ENCODE measurements at regions of chr6 and their contacts with region 1.

Region 1: DNA sequence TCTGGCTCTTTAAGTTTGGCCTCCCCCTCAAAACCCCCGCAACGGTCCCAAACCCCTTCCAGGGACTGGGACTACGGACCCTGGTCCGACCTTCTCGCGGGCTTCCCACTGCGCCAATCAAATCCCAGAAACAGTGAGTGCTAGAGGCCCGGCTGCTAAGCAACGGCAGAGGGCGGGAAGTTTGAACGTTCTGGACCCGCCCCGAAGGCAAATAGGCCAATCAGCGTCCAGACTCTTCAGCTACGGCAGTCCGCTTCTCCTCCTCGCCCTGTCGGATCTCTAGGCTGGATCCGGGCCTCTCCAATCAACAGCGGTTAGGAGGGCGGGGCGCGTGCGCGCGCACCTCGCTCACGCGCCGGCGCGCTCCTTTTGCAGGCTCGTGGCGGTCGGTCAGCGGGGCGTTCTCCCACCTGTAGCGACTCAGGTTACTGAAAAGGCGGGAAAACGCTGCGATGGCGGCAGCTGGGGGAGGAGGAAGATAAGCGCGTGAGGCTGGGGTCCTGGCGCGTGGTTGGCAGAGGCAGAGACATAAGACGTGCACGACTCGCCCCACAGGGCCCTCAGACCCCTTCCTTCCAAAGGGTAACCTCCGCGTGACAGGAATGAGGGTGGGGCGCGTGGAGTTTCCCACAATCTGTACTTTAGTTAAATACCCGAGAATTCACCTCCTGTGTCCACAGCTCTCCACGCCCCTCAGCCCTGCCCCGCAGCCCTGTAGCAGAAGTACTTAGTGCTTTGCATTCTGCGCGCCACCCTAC is at the start of gene MSH5:
- DNase-seq: peak; percentile 99
- H3K4me3 Mint-ChIP-seq: peak within 1 kb of the TSS; percentile 98
- H3K27ac Mint-ChIP-seq: peak within 1 kb of the TSS; percentile 93
- H3K4me1 Mint-ChIP-seq: peaks cover 54% of the 10 kb centered on the region
- H3K27me3 Mint-ChIP-seq: no peaks in the 10 kb centered on the region
- total RNA-seq, gene MSH5: 87.8 and 99.6 TPM in 2 replicates

Region 2: DNA sequence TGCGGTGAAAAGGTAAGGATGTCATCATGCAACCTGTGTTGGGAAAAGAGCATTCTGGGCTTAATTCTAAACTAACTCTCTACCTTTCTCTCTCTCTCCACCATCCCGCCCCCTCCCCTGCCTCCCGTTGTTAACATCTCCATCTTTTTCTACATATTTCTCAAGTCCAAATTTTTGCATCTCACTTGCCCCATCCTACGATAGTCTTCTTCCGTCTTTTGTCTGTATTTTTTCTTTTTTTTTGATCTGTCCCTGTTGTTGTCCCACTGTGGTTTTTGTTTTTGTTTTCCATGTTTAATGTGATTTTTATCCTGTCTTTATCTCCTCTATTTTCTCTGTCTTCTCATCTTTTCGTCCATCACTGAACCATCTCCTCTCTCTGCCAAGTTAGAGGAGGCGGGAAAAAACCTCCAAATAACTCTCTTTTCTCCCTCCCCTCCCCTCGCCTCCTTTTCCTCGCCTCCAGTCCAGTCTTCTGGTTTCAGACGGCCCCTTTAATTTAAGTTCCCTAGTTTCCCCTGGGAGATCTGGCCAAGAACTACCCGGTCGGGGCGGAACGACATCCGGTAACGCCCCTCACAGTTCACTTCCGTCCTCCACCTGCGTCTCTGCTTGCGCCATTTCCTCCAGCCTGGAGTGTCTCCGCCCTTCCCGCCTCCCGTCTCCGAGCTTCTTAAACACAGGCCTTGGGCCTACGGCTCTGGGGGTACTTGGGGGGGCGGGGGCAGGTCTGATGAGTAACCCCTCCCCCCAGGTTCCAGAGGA is 192.7 kb before region 1 on chr6 and contains the start of gene NFKBIL1:
- intact Hi-C with region 1: loop called (anchors 5 kb)
- DNase-seq: peak; percentile 97
- H3K4me3 Mint-ChIP-seq: peak within 1 kb of the TSS; percentile 91
- H3K27ac Mint-ChIP-seq: peak within 1 kb of the TSS; percentile 91
- H3K4me1 Mint-ChIP-seq: peaks cover 51% of the 10 kb centered on the region
- H3K27me3 Mint-ChIP-seq: no peaks in the 10 kb centered on the region
- total RNA-seq, gene NFKBIL1: 14.8 and 16.2 TPM in 2 replicates

Region 3: DNA sequence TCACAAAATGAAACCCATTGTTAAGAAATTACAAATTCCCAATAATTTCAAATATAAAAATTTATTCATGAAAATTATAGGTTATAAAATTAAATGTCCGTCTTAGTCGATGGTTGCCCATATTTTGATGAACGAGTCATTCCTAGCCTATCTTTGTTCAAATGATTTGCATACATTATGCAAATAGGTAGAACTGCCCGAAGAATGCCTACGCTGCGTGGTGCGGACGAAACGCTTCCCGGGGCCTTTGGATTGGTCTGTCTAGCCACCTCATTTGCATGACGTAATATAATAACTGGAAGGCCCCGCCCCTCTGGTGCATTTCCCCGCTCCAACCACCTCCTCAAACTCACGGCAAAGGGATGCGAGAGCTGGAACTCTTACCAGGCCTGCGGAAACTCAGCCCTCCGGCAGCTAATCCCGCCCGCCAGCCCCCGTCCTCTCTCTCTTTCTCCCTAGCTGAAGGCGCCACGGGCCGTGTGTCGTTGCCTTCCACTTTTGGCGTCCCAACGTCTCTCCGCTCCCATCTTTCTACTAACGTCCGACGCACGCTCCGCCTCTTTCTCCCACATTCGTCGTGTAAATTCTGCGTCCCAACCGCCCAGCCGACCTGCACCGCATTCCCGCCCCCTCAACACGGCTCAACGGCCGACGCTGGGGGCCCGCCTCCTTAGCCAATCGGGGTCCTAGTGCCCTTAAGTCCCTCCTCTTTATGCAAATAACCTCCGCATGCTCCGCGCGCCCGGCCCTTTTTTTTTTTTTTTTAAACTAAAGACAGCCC is 119.8 kb before region 1 on chr6:
- intact Hi-C with region 1: loop called (anchors 2 kb)
- DNase-seq: peak; percentile 99
- H3K4me3 Mint-ChIP-seq: peak overlapping the region; percentile 90
- H3K27ac Mint-ChIP-seq: peak overlapping the region; percentile 95
- H3K4me1 Mint-ChIP-seq: peaks cover 46% of the 10 kb centered on the region
- H3K27me3 Mint-ChIP-seq: no peaks in the 10 kb centered on the region

Region 4: GRCh38 chr6:31680840-31681671 is 58.8 kb before region 1 on chr6 and contains the start of gene LY6G5C:
- intact Hi-C with region 1: loop called (anchors 2 kb)
- DNase-seq: peak; percentile 89
- H3K4me3 Mint-ChIP-seq: peak within 1 kb of the TSS; percentile 83
- H3K27ac Mint-ChIP-seq: peak within 1 kb of the TSS; percentile 82
- H3K4me1 Mint-ChIP-seq: peaks cover 25% of the 10 kb centered on the region
- H3K27me3 Mint-ChIP-seq: no peaks in the 10 kb centered on the region
- total RNA-seq, gene LY6G5C: 4.1 and 4.9 TPM in 2 replicates

Region 5: DNA sequence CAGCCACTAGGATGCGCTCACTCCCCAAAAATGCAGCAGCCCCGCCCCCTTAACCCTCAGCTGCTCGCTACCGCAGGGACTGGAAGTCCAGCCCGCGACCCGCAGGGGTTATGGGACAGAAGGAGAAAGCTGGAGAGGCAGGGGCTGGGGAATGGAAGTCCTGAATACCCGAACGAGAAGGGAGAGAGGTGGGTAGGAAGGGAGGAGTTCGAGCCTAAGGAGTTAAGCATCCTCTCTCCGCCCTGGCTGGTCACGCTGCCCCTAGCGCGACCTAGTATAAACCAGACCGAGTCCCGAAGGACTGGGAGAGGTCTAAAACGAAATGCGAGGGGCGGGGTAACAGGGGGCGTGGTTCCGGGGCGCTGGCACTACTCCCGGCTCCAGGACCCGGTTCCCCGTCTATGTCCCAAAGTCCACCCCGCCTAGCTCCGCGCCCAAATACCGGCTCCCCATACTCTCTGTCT is 10.3 kb before region 1 on chr6:
- intact Hi-C with region 1: loop called (anchors 1 kb)
- DNase-seq: peak; percentile 93
- H3K4me3 Mint-ChIP-seq: peak overlapping the region; percentile 97
- H3K27ac Mint-ChIP-seq: peak overlapping the region; percentile 74
- H3K4me1 Mint-ChIP-seq: peaks cover 64% of the 10 kb centered on the region
- H3K27me3 Mint-ChIP-seq: no peaks in the 10 kb centered on the region

Region 6: GRCh38 chr6:31752739-31753319 is 13.0 kb after region 1 on chr6:
- intact Hi-C with region 1: no loop called
- DNase-seq: no peak
- H3K4me3 Mint-ChIP-seq: no peak overlapping the region
- H3K27ac Mint-ChIP-seq: no peak overlapping the region
- H3K4me1 Mint-ChIP-seq: no peaks in the 10 kb centered on the region
- H3K27me3 Mint-ChIP-seq: no peaks in the 10 kb centered on the region

Region 7: DNA sequence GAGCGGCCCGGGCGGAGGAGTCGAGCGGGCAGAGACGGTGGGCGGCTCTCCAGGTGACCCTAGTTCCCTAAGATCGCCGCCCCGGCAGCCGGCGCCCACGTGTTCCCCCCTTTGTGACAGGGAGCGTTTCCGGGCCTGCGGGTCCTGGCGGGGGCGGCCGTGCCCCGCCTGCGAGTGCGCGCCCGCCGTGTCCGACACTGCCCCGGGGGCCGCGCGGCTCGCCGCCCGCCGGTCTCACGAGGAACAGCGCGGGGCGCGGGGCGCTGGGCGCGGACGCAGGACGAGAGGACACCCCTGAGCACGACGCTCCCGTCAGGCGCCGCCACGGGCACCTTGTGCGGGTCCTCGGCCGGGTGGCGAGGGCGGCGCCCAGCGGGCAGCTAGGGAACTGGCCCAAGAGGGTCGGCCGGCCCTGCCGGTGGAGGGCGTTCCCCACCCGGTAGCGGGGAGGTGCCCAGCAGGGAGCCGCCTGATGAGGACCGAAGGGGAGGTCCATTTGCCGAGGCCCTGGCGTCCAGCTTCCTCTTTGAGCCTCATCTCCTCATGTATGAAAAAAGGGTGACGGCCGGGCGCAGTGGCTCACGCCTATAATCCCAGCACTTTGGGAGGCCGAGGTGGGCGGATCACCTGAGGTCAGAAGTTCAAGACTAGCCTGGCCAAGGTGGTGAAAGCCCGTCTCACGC is 55.9 kb after region 1 on chr6 and contains the start of gene VARS1:
- intact Hi-C with region 1: loop called (anchors 2 kb)
- DNase-seq: peak; percentile 96
- H3K4me3 Mint-ChIP-seq: peak within 1 kb of the TSS; percentile 86
- H3K27ac Mint-ChIP-seq: peak within 1 kb of the TSS; percentile 97
- H3K4me1 Mint-ChIP-seq: peaks cover 34% of the 10 kb centered on the region
- H3K27me3 Mint-ChIP-seq: no peaks in the 10 kb centered on the region
- total RNA-seq, gene VARS1: 173 and 181 TPM in 2 replicates

Region 8: DNA sequence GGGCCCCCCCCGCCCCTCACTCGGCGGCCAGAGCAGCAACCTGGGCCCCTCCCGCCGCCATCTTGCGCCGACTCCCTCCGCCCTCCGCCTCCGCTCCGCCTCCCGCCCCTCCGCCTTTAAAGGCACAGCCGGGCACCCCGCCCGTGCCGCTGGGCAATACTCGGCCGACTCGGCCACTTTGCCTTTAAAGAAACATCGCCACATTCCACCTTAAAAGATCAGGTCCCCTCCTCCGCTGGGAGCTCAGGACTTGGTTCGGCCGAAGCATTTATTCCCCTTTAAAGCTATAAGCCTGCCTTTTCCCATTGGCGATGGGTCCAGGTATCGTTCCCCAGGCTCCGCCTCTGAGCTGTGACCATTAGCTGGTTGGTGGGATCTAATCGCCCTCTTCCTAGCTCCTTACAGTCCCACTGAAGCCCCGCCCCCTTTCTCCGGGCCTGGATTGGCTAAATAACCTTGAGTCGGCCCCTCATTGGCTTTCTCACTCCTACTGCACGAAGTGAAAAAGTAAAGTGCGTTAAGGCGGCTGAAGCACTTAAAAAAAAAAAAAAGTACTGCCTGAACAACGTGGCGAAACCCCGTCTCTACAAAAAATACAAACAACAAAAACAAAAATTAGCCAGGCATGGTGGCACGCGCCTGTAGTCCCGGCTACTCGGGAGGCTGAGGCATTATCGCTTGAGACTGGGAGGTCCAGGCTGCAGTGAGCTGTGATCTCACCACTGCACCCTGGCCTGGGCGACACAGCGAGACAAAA is 1578.0 kb after region 1 on chr6 and contains the start of gene ZBTB22:
- intact Hi-C with region 1: loop called (anchors 10 kb)
- DNase-seq: peak; percentile 98
- H3K4me3 Mint-ChIP-seq: peak within 1 kb of the TSS; percentile 96
- H3K27ac Mint-ChIP-seq: peak within 1 kb of the TSS; percentile 96
- H3K4me1 Mint-ChIP-seq: peaks cover 53% of the 10 kb centered on the region
- H3K27me3 Mint-ChIP-seq: no peaks in the 10 kb centered on the region
- total RNA-seq, gene ZBTB22: 11.3 and 14.3 TPM in 2 replicates

Measured in activated CD4-positive, alpha-beta T cell treated with anti-CD3 and anti-CD28 coated beads, Interleukin-2, amount 10 ng/mL, durations not matched to agents 24 days and 14 days (primary cell).